Breast epithelium (tissue), 4 donors: ENCODE measurements at regions of chr3 and their contacts with region 1.

Region 1: DNA sequence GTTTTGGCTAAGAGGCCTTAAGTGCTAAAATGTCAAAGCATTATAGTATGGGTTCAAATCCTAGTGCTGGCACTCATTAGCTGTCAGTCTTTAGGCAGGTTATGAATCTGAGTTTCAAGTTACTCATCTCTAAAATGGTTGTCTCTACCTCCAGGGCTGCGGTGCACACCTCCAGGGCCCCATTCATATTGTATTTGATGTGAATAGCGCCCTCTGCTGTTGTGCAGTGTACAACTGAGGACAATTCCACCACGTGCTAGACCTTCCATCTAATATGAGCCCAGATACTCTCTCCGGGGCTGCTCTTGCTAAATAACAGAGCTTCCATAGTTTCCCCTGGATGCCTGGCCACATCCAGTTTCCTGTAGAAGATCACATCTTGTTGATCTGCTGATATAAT is 54.3 kb downstream of the OXNAD1 start:
- DNase-seq: no peak
- H3K4me3 ChIP-seq: no peak overlapping the region
- H3K27ac ChIP-seq: no peak overlapping the region
- H3K4me1 ChIP-seq: no peaks in the 10 kb centered on the region
- H3K27me3 ChIP-seq: no peaks in the 10 kb centered on the region
- CTCF ChIP-seq: no peak
- POLR2A ChIP-seq: no peak

Region 2: DNA sequence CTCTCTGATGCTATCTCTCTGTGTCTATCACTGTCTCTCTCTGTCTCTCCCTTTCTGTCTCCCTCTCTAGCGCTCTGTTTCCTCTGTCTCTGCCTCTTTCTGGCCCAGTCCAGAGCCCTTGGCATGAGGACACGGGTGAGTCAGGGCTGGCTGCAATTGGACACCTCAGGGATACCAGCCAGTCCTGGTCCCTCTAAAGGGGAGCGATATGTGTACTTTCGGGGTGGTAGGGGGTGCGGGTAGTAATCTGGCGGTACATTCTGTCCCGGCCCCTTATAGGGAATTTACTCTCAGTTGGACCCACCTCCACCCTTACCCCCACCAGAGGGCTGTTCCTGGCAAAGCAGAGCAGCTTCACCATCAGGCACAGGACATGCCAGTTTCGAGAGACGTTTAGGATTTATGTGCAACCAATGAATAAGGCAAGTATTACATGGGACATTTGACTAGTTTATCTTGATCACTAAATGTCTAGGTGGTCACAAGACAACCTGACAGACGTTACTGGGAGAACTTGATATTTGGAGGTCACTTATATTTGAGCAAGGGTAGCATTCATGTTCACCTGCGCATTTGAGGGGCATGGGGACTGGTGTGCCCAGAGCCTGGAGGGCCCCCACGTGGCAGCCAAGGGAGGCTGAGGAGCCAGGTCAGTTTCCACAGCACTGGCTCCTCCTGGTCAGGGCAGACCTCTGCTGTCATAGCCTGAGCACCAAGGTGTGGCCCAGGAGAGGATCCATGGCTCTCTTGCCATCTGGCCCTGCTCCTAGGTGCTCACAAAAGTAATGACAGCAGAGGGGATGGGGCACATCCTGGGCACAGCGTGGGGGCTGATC is 821.6 kb after region 1 on chr3:
- intact Hi-C with region 1: no loop called
- DNase-seq: no peak
- H3K4me3 ChIP-seq: no peak overlapping the region
- H3K27ac ChIP-seq: no peak overlapping the region
- H3K4me1 ChIP-seq: no peaks in the 10 kb centered on the region
- H3K27me3 ChIP-seq: no peaks in the 10 kb centered on the region
- CTCF ChIP-seq: no peak
- POLR2A ChIP-seq: no peak

Region 3: DNA sequence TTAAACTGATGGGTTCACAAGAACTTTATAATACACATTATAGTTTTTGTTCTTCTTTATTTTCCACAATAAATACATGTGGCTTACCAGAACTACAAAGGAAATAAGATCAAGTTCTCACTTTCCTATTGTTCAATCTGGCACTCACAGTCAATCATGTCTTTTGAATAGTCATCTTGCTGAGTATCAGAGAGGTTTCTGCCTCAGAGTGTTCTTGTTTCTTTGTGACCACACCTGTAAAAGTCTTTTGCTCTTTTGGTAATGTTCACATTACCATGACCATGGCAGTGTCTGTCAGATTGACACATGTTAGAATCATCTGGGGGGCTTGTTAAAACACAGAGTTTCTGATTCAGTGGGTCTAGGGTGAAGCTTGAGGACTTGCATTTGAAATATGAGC is 1970.8 kb after region 1 on chr3:
- intact Hi-C with region 1: loop called (anchors 5 kb)
- DNase-seq: no peak
- H3K4me3 ChIP-seq: no peak overlapping the region
- H3K27ac ChIP-seq: no peak overlapping the region
- H3K4me1 ChIP-seq: no peaks in the 10 kb centered on the region
- H3K27me3 ChIP-seq: no peaks in the 10 kb centered on the region
- CTCF ChIP-seq: no peak
- POLR2A ChIP-seq: no peak